Prostate gland (tissue), 2 donors: ENCODE measurements at regions of chr2 and their contacts with region 1.

Region 1: DNA sequence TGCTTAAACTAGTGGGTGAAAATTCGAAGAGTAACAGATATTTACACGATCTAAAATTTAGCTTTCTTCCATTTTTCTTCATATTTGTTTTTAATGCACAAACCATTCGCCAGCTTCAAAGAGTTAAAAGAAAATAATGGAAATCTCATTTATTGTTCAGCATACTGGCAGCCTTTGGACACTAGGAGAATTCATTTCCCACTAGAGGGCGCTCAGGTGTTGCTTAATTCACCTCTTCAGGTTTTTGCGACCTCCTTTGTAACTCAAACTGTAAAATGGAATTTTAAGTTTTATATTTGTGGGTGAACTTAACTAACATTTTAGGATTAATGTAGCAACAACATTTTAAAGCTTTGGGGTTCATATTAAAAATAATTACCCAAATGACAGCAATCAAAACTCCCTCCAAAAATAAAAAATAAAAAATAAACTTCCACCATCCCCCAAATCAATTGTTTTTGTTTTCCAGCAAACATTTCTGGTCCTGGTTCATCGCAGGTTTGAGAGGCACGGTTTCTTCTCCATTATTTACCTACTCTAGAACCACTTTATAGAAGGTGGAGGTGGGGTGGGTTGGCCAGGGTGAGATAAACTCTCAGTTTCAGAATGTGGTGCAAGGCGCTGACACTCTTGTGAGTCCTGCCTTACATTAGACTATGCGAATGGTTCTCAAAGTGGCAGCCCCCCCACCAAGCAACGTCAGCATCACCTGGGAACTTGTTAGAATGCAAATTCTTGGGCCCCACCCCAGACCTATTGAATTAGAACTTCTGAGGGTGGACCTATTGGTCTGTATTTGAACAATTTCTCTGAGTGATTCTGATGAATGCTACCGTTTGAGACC is 24.7 kb upstream of the PNPT1 start:
- DNase-seq: peak; percentile 64
- H3K4me3 ChIP-seq: no peak overlapping the region
- H3K27ac ChIP-seq: no peak overlapping the region
- H3K4me1 ChIP-seq: no peaks in the 10 kb centered on the region
- H3K27me3 ChIP-seq: no peaks in the 10 kb centered on the region
- CTCF ChIP-seq: peak; percentile 64 to 77 (median 72)
- POLR2A ChIP-seq: no peak

Region 2: DNA sequence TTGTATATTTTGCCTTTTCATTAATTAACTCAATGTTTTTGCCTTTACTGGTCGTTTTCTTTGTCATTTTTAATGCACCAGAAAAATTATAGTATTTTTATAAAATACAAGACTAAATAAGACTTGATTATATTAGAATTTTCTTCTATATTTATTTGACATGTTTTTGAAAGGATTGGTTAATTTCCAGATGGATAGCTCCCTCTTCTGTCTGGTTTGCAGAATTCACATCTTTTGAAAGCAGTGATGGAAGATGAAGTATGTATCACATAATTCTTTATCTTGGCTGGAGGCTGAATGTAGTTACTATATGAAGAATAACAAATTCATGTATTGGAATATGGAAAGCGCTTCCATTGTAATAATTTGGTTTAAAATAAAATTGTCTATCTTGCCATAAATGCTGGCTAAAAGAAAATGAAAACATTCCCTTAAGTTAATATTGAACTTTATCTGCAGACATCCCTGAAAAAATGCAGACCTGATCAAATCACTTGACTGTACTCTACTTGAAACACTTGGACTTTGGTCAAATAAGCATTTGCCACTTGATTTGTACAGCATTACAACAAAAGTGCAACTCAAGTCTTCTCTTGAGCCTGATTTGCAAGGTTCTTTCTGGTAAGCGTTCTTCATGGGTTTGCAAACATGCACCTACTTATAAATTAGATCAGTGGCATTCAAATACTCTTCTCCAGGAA is 291.5 kb after region 1 on chr2:
- intact Hi-C with region 1: loop called (anchors 2 kb)
- DNase-seq: no peak
- H3K4me3 ChIP-seq: no peak overlapping the region
- H3K27ac ChIP-seq: no peak overlapping the region
- H3K4me1 ChIP-seq: no peaks in the 10 kb centered on the region
- H3K27me3 ChIP-seq: no peaks in the 10 kb centered on the region
- CTCF ChIP-seq: peak; percentile 30 to 63 (median 50)
- POLR2A ChIP-seq: no peak

Region 3: DNA sequence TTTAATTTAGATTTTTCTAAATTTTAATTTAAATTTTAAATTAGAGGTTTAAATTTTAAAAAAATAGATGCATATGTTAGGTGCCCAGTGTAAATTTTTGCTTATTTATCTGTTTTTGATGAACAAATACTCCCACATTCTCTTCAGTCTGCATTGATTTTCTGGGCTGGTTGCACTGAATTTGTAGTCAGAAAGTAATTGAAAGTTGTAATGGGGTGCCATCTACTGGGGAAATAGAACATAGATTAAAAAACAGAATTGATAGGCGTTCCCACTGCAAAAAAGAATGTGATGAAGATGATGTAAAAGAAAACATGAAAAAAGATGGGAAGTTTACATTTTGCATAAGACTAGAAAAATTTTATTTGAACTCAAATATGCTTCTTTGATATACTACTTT is 413.8 kb after region 1 on chr2:
- intact Hi-C with region 1: loop called (anchors 5 kb)
- DNase-seq: no peak
- H3K4me3 ChIP-seq: no peak overlapping the region
- H3K27ac ChIP-seq: no peak overlapping the region
- H3K4me1 ChIP-seq: no peaks in the 10 kb centered on the region
- H3K27me3 ChIP-seq: no peaks in the 10 kb centered on the region
- CTCF ChIP-seq: peak in 3 of 4 experiments; percentile 13 to 51 (median 45)
- POLR2A ChIP-seq: no peak